ENCODE measurements at regions of chr1 and their contacts with region 1.

Region 1: DNA sequence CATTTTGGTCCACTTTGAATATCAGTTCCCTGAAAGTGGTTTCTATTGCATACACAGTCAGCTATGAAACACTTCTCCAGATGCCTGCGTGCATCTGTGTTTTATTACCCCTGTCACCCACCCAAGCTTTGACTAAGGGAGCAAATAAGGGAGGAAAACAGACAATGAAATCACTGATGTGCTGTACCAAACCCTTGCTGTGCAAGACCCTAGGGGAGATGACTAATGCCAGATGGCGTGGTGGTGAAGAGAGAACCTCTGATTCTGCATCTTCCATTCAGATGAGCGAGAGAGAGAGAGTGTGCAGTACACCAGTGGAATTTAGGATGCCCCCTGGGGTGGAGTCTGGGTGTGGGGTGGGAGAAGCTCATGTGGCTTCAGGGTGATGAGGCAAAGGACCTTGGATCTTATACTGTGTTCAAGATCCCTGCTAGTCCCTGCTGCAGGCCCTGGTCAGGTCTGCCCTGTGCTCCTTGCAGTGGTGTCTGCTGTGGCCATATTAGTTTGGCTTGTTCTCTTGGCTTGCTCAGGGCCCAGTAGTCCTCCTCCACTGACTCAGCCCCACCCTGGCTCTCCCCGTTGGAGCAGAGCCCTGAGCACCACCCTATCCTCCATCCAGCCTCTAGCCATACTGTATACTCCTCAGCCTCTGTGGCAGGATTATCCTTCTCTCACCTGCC is 18.5 kb downstream of the CLCA1 start:
- DNase-seq: peak; percentile 43 to 60 (median 53)
- ATAC-seq: peak; percentile 75 to 83
- H3K4me3 ChIP-seq: no peak overlapping the region
- H3K27ac ChIP-seq: no peak overlapping the region
- H3K4me1 ChIP-seq: no peaks in the 10 kb centered on the region
- H3K27me3 ChIP-seq: no peaks in the 10 kb centered on the region

Region 2: DNA sequence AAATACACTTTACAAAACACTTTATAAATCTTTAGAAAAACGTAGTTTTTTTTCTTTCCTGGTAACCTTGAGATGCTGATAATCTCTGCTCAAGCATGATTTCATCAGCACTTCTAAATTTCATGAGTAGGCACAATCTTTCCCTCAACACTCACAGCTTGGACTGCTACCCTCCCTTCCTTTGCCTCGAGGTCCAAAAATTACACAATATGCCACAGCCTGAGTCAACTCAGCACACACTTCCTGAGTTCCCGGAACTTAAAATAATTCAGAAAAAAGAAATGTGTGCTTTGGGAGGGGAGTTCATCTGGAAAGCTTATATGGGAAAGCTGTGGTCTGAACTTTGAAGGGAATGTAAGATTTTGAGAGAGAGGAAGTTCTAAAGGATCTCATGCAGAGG is 57.4 kb before region 1 on chr1:
- intact Hi-C with region 1: no loop called
- DNase-seq: peak in 2 of 3 donors; percentile 30 to 47
- ATAC-seq: peak; percentile 99 to 100
- H3K4me3 ChIP-seq: no peak overlapping the region
- H3K27ac ChIP-seq: no peak overlapping the region
- H3K4me1 ChIP-seq: no peaks in the 10 kb centered on the region
- H3K27me3 ChIP-seq: no peaks in the 10 kb centered on the region

Region 3: DNA sequence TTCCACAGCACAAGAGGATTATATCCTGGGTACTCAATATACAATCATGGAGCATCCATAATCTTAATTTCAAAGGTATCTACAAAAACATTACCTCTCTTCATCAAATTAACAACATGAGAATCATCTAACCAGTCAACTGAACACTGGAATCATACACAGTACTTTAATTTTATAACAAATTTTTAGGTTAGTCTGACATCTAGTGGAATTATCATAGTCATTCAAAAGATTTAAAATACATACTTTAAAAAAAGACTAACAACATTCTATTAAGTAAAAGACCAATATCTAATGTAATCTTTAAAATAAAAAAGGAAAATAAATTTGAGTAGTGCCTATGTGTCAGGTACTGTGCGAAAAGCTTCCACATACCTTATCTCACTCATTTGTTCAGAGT is 200.3 kb after region 1 on chr1:
- intact Hi-C with region 1: loop called in 1 of 4 experiments (anchors 10 kb)
- DNase-seq: no peak
- ATAC-seq: no peak
- H3K4me3 ChIP-seq: no peak overlapping the region
- H3K27ac ChIP-seq: no peak overlapping the region
- H3K4me1 ChIP-seq: no peaks in the 10 kb centered on the region
- H3K27me3 ChIP-seq: no peaks in the 10 kb centered on the region

Measured in right cardiac atrium (tissue), 5 donors.